K562 (cell line): ENCODE measurements at regions of chr17 and their contacts with region 1.

Region 1: GRCh38 chr17:75034236-75034908 is 12.4 kb downstream of the ATP5PD start:
- DNase-seq: peak; percentile 65 to 96 (median 69)
- ATAC-seq: peak; percentile 72
- H3K4me3 ChIP-seq: peak overlapping the region; percentile 69
- H3K27ac ChIP-seq: peak overlapping the region; percentile 96
- H3K4me1 ChIP-seq: peaks cover 31% of the 10 kb centered on the region in 2 experiments
- H3K27me3 ChIP-seq: no peaks in the 10 kb centered on the region
- CTCF ChIP-seq: peak in 2 of 3 experiments; percentile 14 to 41; a peak in 2 of 6 replicates
- EP300 ChIP-seq: peak; percentile 60; the same call in 1 of the 2 replicates
- POLR2A ChIP-seq: peak; percentile 32
- RAD21 ChIP-seq: peak in 1 of 2 experiments; percentile 29; a peak in 2 of 4 replicates

Region 2: DNA sequence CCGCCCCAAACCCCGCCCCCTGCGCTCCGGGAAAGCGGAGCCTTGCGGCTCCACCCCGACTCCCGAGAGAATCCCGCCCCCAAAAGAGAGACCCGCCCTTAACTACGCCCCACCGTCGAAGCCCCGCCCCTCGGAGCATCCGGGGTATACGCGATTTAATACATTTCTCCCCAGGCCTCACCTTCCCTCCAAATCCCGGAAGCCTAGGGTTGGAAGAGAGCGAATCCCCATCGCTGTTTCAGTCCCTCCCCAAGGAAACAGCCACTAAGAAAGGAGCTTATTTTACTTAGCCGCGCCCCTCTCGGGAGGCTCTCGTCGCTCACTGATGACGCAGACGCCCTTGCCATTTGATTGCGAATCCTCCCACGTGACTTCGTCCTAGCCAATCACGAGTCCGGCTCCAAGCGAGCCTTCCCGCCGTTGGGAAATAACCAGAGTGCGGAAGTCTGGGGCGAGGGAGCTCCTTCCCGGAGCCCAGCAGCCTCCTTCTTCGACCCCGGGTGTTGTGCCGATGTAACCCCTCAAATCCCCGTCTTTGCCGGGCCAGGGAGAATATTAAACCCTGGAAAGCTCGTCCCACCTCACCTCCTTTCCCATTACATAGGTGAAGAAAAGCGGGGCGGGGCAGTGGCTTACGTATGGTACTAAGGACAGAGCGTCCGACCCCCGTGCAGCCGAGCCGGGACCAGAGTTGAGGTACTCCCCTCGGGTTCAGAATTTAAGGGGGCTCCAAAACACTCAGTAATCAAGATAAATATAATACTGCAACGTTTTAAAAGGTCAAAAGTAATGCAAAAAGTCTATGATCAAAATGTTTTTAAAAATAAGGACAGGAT is 161.1 kb before region 1 on chr17:
- CTCF ChIA-PET with region 1: no interaction called
- POLR2A ChIA-PET with region 1: interaction called, 3 read pairs
- in situ Hi-C with region 1: no loop called
- intact Hi-C with region 1: loop called (anchors 10 kb)
- DNase-seq: peak; percentile 94 to 100 (median 98)
- ATAC-seq: peak; percentile 79
- H3K4me3 ChIP-seq: peak overlapping the region; percentile 72
- H3K27ac ChIP-seq: peak overlapping the region; percentile 95
- H3K4me1 ChIP-seq: peaks cover 68 to 69% of the 10 kb centered on the region in 2 experiments
- H3K27me3 ChIP-seq: no peaks in the 10 kb centered on the region
- CTCF ChIP-seq: no peak
- EP300 ChIP-seq: peak; percentile 62
- POLR2A ChIP-seq: peak; percentile 95
- RAD21 ChIP-seq: peak in 1 of 2 experiments; percentile 30; a peak in 2 of 4 replicates

Region 3: GRCh38 chr17:74935585-74936469 is 98.5 kb before region 1 on chr17 and contains the start of gene OTOP3:
- CTCF ChIA-PET with region 1: no interaction called
- POLR2A ChIA-PET with region 1: no interaction called
- in situ Hi-C with region 1: no loop called
- intact Hi-C with region 1: no loop called
- DNase-seq: no peak
- ATAC-seq: no peak
- H3K4me3 ChIP-seq: no peak within 1 kb of the TSS
- H3K27ac ChIP-seq: no peak within 1 kb of the TSS
- H3K4me1 ChIP-seq: peaks cover 15 to 20% of the 10 kb centered on the region in 2 experiments; a peak in 4 of 5 replicates
- H3K27me3 ChIP-seq: peaks cover 6 to 19% of the 10 kb centered on the region in 2 experiments; a peak in 4 of 5 replicates
- CTCF ChIP-seq: no peak
- EP300 ChIP-seq: no peak
- POLR2A ChIP-seq: no peak
- RAD21 ChIP-seq: no peak
- polyA plus RNA-seq, gene OTOP3: not detected

Region 4: DNA sequence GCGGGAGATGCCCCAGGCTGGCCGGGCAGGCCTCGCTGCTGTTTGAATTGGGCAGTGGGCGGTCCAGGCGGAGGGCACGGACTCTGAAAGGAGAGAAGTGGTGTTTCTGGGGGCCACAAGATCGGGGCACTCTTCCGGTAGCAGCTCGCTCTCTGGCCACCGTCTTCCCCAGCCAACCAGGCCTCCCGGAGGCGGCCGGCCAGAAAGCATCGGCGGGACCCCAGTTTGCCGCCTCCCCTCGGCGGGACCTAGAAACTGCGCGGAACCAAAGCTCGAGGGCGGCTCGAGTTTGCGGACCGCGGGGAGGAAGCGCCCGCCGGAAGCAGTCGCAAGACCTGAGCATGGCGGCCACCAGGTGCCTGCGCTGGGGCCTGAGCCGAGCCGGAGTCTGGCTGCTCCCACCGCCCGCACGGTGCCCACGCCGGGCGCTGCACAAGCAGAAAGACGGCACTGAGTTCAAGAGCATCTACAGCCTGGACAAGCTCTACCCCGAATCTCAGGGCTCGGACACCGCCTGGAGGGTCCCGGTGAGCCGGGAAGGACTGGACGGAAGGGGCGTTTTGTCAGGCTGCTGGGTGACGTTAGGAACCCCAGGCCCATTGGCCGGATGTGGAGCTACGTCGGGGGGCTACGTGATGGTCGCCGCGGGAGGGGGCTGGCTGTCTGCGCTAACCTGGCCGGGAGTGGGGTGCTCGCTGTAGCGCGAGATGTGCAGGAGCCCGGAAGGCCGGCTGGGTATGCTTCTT is 21.9 kb before region 1 on chr17 and contains the start of gene MRPL58:
- CTCF ChIA-PET with region 1: interaction called, 5 read pairs
- POLR2A ChIA-PET with region 1: interaction called, 26 read pairs
- in situ Hi-C with region 1: no loop called
- intact Hi-C with region 1: no loop called
- DNase-seq: peak; percentile 89 to 92 (median 90)
- ATAC-seq: peak; percentile 97
- H3K4me3 ChIP-seq: peak within 1 kb of the TSS; percentile 85
- H3K27ac ChIP-seq: peak within 1 kb of the TSS; percentile 82
- H3K4me1 ChIP-seq: peaks cover 9 to 10% of the 10 kb centered on the region in 2 experiments; a peak in 4 of 5 replicates
- H3K27me3 ChIP-seq: no peaks in the 10 kb centered on the region
- CTCF ChIP-seq: peak; percentile 42 to 79 (median 51); a peak in 5 of 6 replicates
- EP300 ChIP-seq: peak; percentile 40; the same call in 1 of the 2 replicates
- POLR2A ChIP-seq: peak; percentile 91
- RAD21 ChIP-seq: peak; percentile 19 to 45; a peak in 3 of 4 replicates
- polyA plus RNA-seq, gene MRPL58: 30.8 to 49.6 TPM

Region 5: GRCh38 chr17:75046582-75047289 is 12.4 kb after region 1 on chr17 and contains the starts of genes ATP5PD and KCTD2:
- CTCF ChIA-PET with region 1: no interaction called
- POLR2A ChIA-PET with region 1: interaction called, 23 read pairs
- in situ Hi-C with region 1: no loop called
- intact Hi-C with region 1: loop called (anchors 1 kb)
- DNase-seq: peak; percentile 97 to 99 (median 98)
- ATAC-seq: peak; percentile 98
- H3K4me3 ChIP-seq: peak within 1 kb of the TSS; percentile 100
- H3K27ac ChIP-seq: peak within 1 kb of the TSS; percentile 97
- H3K4me1 ChIP-seq: peaks cover 11 to 15% of the 10 kb centered on the region in 2 experiments
- H3K27me3 ChIP-seq: no peaks in the 10 kb centered on the region
- CTCF ChIP-seq: peak in 1 of 3 experiments; percentile 13; a peak in 1 of 6 replicates
- EP300 ChIP-seq: peak; percentile 33
- POLR2A ChIP-seq: peak; percentile 97
- RAD21 ChIP-seq: no peak
- polyA plus RNA-seq, gene ATP5PD: 786 to 828 TPM
- polyA plus RNA-seq, gene KCTD2: 1.7 to 2.3 TPM

Region 6: DNA sequence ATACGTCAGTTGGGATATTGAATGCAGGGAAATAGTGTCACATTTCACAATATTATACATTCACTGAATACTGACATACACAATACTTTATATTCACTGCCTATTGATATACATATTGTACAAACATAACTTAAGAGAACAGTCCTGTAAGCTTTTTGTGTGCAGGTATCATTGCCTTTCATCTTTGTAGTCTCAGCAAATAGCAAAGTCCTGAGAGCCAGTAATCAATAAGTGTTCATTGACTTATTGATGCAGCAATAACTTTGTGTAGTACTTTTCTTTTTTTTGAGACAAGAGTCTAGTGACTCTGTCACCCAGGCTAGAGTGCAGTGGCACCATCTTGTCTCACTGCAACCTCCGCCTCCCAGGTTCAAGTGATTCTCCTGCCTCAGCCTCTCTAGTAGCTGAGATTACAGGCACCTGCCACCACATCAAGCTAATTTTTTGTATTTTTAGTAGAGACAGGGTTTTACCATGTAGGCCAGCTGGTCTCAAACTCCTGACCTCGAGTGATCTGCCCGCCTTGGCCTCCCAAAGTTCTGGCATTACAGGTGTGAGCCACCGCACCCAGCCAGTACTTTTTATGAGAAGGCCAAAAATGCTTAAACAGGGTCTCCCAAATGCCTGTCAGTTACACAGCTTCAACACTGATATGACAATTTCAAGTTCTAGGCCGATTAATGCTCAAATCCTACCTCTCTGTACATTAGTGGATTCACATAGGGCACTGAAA is 165.7 kb after region 1 on chr17:
- CTCF ChIA-PET with region 1: no interaction called
- POLR2A ChIA-PET with region 1: no interaction called
- in situ Hi-C with region 1: no loop called
- intact Hi-C with region 1: loop called (anchors 5 kb)
- DNase-seq: no peak
- ATAC-seq: no peak
- H3K4me3 ChIP-seq: no peak overlapping the region
- H3K27ac ChIP-seq: no peak overlapping the region
- H3K4me1 ChIP-seq: peaks cover 0 to 4% of the 10 kb centered on the region in 2 experiments; a peak in 1 of 5 replicates
- H3K27me3 ChIP-seq: no peaks in the 10 kb centered on the region
- CTCF ChIP-seq: no peak
- EP300 ChIP-seq: no peak
- POLR2A ChIP-seq: no peak
- RAD21 ChIP-seq: no peak